Pancreas (tissue), 10 donors: ENCODE measurements at regions of chr15 and their contacts with region 1.

Region 1: GRCh38 chr15:45268135-45268534 is 16.1 kb downstream of the SLC28A2 start:
- DNase-seq: peak in 2 of 6 donors; percentile 29 to 51
- ATAC-seq: peak; percentile 38 to 85 (median 61)
- H3K4me3 ChIP-seq: no peak overlapping the region
- H3K27ac ChIP-seq: no peak overlapping the region
- H3K4me1 ChIP-seq: no peaks in the 10 kb centered on the region
- H3K27me3 ChIP-seq: no peaks in the 10 kb centered on the region
- CTCF ChIP-seq: no peak

Region 2: DNA sequence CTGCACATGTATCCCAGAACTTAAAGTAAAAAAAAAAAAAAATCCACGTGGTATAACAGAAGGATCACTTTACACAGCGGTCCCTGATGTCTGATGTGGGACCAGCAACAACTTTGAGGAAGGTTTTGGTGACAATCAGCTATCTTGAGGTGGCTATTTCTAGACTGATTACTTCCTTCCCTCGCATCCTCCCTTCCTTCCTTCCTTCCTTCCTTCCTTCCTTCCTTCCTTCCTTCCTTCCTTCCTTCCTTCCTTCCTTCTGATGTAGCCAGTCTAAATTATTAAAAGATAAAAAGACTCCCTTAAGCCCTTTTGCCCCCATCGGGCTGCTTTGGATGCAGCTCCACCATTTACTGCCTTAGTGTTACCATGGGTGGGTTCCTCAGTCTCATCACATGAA is 230.2 kb before region 1 on chr15:
- intact Hi-C with region 1: no loop called
- DNase-seq: no peak
- ATAC-seq: no peak
- H3K4me3 ChIP-seq: no peak overlapping the region
- H3K27ac ChIP-seq: peak overlapping the region; percentile 7 to 54 (median 48)
- H3K4me1 ChIP-seq: peaks cover 0 to 3% (median 0%) of the 10 kb centered on the region in 3 donors
- H3K27me3 ChIP-seq: no peaks in the 10 kb centered on the region
- CTCF ChIP-seq: no peak

Region 3: GRCh38 chr15:45212493-45212892 is 55.6 kb before region 1 on chr15:
- intact Hi-C with region 1: loop called in 2 of 3 experiments (anchors 10 kb)
- DNase-seq: no peak
- ATAC-seq: no peak
- H3K4me3 ChIP-seq: no peak overlapping the region
- H3K27ac ChIP-seq: no peak overlapping the region
- H3K4me1 ChIP-seq: no peaks in the 10 kb centered on the region
- H3K27me3 ChIP-seq: no peaks in the 10 kb centered on the region
- CTCF ChIP-seq: no peak